ENCODE measurements at regions of chr11 and their contacts with region 1.

Region 1: DNA sequence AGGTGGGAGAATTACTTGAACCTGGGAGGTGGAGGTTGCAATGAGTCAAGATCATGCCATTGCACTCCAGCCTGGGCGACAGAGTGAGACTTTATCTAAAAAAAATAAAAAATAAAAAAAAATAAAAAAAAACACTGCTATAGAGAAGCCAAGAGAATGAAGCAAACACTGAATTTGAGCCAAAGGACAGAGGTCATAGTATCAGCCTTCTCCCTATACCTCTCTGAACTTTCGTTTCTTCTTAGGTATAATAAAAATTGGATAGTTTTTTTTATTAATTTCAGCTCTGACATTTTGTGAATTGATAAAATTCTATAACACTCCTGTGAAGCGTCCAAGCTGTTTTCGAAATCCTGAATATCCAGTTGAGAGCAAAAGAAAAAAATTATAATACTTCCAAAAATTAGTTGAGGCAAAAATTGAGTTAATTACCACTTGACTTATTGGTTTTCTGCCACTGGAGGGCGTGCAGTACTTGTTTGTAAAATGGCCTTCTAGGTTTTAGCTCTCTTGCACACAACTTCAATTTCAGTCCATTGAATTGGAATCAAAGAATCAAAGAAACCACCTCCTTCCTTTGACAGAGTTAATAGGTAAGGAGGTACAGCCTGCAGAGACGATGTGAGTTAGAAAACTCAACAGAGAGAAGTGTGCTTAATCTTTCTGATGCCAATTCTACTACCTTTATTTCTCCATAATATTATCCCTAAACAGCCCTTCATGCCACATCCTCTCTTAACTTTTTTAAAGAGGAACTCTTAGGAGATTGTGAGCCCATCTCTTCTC is 143.2 kb downstream of the BBOX1 start:
- DNase-seq: no peak
- ATAC-seq: peak; percentile 53

Region 2: GRCh38 chr11:26974069-26974783 is 209.6 kb before region 1 on chr11:
- intact Hi-C with region 1: no loop called
- DNase-seq: no peak
- ATAC-seq: no peak

Region 3: GRCh38 chr11:27296497-27296896 is 112.6 kb after region 1 on chr11:
- intact Hi-C with region 1: loop called (anchors 2 kb)
- DNase-seq: no peak
- ATAC-seq: peak; percentile 77

Region 4: GRCh38 chr11:27353593-27354358 is 169.9 kb after region 1 on chr11:
- intact Hi-C with region 1: loop called (anchors 10 kb)
- DNase-seq: no peak
- ATAC-seq: no peak

Region 5: GRCh38 chr11:27485930-27486773 is 302.3 kb after region 1 on chr11:
- intact Hi-C with region 1: loop called (anchors 1 kb)
- DNase-seq: no peak
- ATAC-seq: peak; percentile 25